RWPE1 (cell line): ENCODE measurements at regions of chr9 and their contacts with region 1.

Region 1: DNA sequence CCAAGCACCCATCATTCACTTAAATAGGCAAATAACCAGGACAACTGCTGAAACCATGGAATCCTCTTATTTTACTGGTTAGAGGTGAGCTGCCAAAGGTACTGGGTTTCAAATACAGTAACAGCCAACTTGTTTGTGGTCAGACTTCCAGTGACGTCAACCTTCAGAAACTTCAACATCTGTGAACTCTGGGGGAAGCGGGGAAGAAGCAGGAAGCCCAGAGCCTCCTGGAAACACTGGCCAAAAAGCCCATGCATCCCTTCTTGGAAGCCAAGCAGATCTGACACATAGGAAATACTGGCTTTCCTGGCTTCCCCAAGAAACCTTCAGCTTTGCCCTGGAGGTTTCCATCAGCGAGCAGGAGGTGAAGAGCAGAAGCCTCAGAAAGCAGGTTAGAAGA is 4.9 kb upstream of the FRRS1L start:
- DNase-seq: no peak
- H3K27ac ChIP-seq: no peak overlapping the region
- CTCF ChIP-seq: no peak

Region 2: DNA sequence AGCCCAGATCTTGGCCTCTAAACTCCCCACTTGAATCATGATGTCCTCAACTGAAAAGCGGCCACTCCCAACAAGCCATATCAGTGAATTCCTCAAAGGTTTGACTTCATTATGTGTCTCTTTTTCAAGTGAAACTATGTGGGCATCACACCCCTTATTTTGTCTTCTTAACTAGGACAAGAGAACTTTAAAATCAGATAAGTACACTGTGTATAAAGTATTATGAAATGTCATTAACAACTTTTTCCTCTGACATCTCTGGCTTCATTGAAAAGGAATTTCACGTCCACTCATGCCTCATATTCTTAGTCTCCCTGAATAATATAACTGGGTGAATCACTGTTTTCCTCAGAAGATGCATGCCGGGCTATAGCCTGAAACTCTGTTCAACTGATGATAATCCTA is 732.0 kb before region 1 on chr9:
- CTCF ChIA-PET with region 1: no interaction called
- POLR2A ChIA-PET with region 1: no interaction called
- DNase-seq: peak; percentile 68
- H3K27ac ChIP-seq: no peak overlapping the region
- CTCF ChIP-seq: no peak

Region 3: GRCh38 chr9:109411798-109412352 is 239.9 kb after region 1 on chr9:
- CTCF ChIA-PET with region 1: no interaction called
- POLR2A ChIA-PET with region 1: interaction called, 11 read pairs
- DNase-seq: peak; percentile 28
- H3K27ac ChIP-seq: no peak overlapping the region
- CTCF ChIP-seq: peak; percentile 76